Activated T-helper 1 cell treated with anti-CD3 and anti-CD28 coated beads, Interleukin-12 subunit alpha, Interleukin-12 subunit beta, Interleukin-2, Interleukin-4 antibody, amounts not matched to agents 30 ng/mL and 10 ng/mL and 1 ng/mL, durations not matched to agents 14 hours and 24 hours and 36 hours (primary cell): ENCODE measurements at regions of chr10 and their contacts with region 1.

Region 1: DNA sequence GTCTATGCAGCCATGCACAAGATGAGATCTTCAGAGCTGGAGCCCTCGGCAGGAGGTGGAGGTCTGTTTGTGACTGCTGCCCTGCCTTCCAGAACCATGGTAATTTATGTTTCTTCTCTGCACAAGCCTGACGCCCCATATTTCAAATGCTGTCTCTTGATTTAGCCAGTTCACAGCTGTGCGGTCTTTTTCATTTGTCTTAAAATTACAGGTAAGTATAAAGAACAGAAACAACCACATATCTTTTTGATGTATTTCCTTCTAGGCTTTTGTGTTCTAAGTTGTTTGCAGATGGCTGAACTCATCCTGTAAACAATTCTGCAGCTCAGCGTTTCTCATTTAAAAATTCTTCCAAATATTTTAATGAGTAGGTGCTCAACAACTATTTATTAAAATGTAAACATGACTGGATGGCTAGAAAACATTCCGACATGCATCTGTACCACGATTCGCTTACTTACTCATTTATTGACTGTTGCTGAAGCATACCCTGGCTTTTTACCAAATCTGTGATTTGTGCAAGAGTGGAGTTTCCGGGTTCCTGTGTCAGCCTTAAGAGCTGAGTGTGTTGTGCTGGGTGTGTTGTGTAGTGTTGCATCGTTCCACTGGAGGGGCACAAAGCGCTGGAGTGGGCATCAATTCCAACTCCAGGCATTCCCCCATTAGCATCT is 58.9 kb downstream of the PIP4K2A start:
- DNase-seq: no peak
- H3K4me3 Mint-ChIP-seq: peak overlapping the region; percentile 72
- H3K27ac Mint-ChIP-seq: peak overlapping the region; percentile 94
- H3K4me1 Mint-ChIP-seq: peaks cover 95% of the 10 kb centered on the region
- H3K27me3 Mint-ChIP-seq: no peaks in the 10 kb centered on the region

Region 2: DNA sequence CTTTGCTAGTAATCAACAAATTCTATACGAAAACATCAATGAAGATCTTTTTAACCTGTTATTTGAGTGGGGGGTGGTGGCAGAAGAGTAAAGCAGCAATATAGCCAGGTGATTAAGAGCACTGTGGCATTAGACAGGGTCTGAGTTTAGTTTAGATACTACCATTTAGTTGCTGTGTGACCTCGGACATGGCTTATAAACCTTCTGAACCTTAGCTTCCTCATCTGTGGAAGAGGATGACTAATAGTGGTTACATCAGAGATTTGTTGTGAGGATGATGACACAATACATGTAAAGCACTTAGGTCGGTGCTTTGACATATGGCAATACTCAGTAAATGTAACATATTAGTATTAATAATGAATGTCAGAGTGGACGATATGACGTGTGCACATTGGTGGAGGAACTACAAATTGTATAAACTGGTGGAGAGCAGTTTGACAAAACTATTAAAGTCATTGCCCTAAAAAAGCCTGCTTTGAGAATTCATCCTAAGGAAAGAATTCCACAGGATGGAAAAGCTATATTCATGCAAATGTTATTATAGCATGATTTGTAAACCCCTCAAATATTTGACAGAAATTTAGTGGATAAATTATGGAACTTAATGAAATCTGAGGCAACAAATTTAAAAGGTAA is 285.9 kb before region 1 on chr10:
- intact Hi-C with region 1: loop called (anchors 10 kb)
- DNase-seq: no peak
- H3K4me3 Mint-ChIP-seq: no peak overlapping the region
- H3K27ac Mint-ChIP-seq: no peak overlapping the region
- H3K4me1 Mint-ChIP-seq: peaks cover 50% of the 10 kb centered on the region
- H3K27me3 Mint-ChIP-seq: no peaks in the 10 kb centered on the region

Region 3: GRCh38 chr10:22666287-22667092 is 11.0 kb after region 1 on chr10:
- intact Hi-C with region 1: loop called (anchors 1 kb)
- DNase-seq: peak; percentile 57
- H3K4me3 Mint-ChIP-seq: peak overlapping the region; percentile 74
- H3K27ac Mint-ChIP-seq: peak overlapping the region; percentile 85
- H3K4me1 Mint-ChIP-seq: peaks cover 66% of the 10 kb centered on the region
- H3K27me3 Mint-ChIP-seq: no peaks in the 10 kb centered on the region

Region 4: DNA sequence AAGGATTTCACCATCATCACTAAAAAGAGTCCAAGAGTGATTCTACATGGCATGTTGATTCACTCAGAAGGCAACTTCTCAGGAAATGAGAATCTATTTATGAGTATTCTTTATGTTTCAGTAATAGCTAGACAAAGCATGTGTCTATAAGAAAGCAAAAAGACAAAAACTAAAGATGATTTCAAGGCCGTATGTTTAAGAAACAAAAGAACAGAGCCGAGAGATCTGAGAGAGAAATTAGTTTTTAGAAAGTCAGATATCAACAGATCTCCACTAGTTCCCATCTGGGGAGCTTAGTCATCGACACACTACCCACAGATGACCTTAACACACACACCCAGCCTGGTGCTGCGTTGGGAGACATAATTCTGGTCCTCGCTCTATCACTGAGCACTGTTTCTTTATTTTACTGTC is 37.9 kb after region 1 on chr10:
- intact Hi-C with region 1: loop called (anchors 1 kb)
- DNase-seq: no peak
- H3K4me3 Mint-ChIP-seq: peak overlapping the region; percentile 68
- H3K27ac Mint-ChIP-seq: peak overlapping the region; percentile 91
- H3K4me1 Mint-ChIP-seq: peaks cover 67% of the 10 kb centered on the region
- H3K27me3 Mint-ChIP-seq: no peaks in the 10 kb centered on the region